PC-9 (cell line): ENCODE measurements at regions of chr20 and their contacts with region 1.

Region 1: GRCh38 chr20:561437-562231 is 18.0 kb upstream of the CSNK2A1 start:
- DNase-seq: peak in 1 of 2 experiments; percentile 73
- H3K4me3 ChIP-seq: no peak overlapping the region
- H3K27ac ChIP-seq: no peak overlapping the region
- H3K4me1 ChIP-seq: no peaks in the 10 kb centered on the region
- H3K27me3 ChIP-seq: no peaks in the 10 kb centered on the region
- CTCF ChIP-seq: peak; percentile 95

Region 2: GRCh38 chr20:354298-355064 is 207.2 kb before region 1 on chr20:
- CTCF ChIA-PET with region 1: no interaction called
- POLR2A ChIA-PET with region 1: no interaction called
- intact Hi-C with region 1: loop called (anchors 1 kb)
- DNase-seq: peak; percentile 59 to 80
- H3K4me3 ChIP-seq: no peak overlapping the region
- H3K27ac ChIP-seq: no peak overlapping the region
- H3K4me1 ChIP-seq: no peaks in the 10 kb centered on the region
- H3K27me3 ChIP-seq: no peaks in the 10 kb centered on the region
- CTCF ChIP-seq: peak; percentile 96

Region 3: GRCh38 chr20:667391-667964 is 105.8 kb after region 1 on chr20:
- CTCF ChIA-PET with region 1: no interaction called
- POLR2A ChIA-PET with region 1: no interaction called
- intact Hi-C with region 1: loop called (anchors 5 kb)
- DNase-seq: peak in 1 of 2 experiments; percentile 55
- H3K4me3 ChIP-seq: no peak overlapping the region
- H3K27ac ChIP-seq: no peak overlapping the region
- H3K4me1 ChIP-seq: no peaks in the 10 kb centered on the region
- H3K27me3 ChIP-seq: no peaks in the 10 kb centered on the region; the same call in 1 of the 2 replicates
- CTCF ChIP-seq: peak; percentile 89

Region 4: DNA sequence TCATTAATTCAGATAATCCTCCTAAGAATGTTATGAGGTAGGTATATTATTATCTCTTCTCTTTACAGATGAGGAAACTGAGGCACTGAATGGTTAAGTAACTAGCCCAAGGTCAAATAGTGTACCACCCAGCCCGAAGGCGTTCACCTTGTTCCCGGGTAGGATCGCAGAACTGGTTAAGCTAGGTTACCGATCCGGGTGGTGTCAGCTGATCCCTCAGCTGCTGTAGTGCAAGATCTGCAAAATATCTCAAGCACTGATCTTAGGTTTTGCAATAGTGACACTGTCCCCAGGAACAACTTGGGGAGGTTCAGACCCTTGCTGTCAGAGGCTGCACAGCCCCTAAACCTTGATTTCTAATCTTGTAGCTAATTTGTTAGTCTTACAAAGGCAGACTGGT is 178.5 kb after region 1 on chr20:
- CTCF ChIA-PET with region 1: interaction called, 6 read pairs
- POLR2A ChIA-PET with region 1: no interaction called
- intact Hi-C with region 1: loop called (anchors 1 kb)
- DNase-seq: peak in 1 of 2 experiments; percentile 47
- H3K4me3 ChIP-seq: no peak overlapping the region
- H3K27ac ChIP-seq: no peak overlapping the region
- H3K4me1 ChIP-seq: peaks cover 16% of the 10 kb centered on the region
- H3K27me3 ChIP-seq: no peaks in the 10 kb centered on the region
- CTCF ChIP-seq: no peak

Region 5: GRCh38 chr20:956330-956951 is 394.8 kb after region 1 on chr20:
- CTCF ChIA-PET with region 1: no interaction called
- POLR2A ChIA-PET with region 1: no interaction called
- intact Hi-C with region 1: loop called (anchors 2 kb)
- DNase-seq: peak in 1 of 2 experiments; percentile 74
- H3K4me3 ChIP-seq: no peak overlapping the region
- H3K27ac ChIP-seq: no peak overlapping the region
- H3K4me1 ChIP-seq: no peaks in the 10 kb centered on the region
- H3K27me3 ChIP-seq: peaks cover 24% of the 10 kb centered on the region
- CTCF ChIP-seq: peak; percentile 99